HEK293 (cell line): ENCODE measurements at regions of chr3 and their contacts with region 1.

Region 1: DNA sequence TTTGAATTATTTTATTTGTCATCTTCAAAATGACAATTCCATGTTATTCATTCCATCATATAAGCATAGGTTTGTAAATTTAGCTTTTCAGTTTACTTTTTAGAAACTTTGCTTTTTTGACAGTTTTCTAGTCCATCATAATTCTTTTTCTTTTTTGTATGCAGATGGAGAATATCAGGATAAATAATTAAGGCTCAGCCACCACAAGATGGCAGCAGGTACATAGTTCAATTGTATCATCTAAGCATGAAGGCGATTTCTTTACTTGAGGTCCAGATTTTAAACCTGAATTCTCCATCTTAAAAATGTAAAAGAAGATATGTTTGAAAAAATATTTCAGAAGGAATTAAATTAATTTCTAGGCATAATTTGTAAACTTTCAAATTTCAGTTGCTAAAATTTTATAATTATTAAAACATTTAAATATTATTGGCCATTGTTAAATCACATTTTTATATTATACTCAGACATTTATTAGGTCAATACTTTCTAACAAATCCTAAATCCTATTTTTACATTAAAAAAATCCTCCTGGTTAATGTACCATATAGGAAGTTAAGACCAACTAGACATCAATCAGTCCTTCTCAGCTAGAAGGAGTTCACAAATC is 15.1 kb downstream of the PLSCR5 start:
- H3K4me3 ChIP-seq: no peak overlapping the region
- H3K27ac ChIP-seq: no peak overlapping the region
- H3K4me1 ChIP-seq: no peaks in the 10 kb centered on the region
- CTCF ChIP-seq: no peak

Region 2: GRCh38 chr3:146227486-146227885 is 362.5 kb before region 1 on chr3:
- CTCF ChIA-PET with region 1: no interaction called
- POLR2A ChIA-PET with region 1: no interaction called
- H3K4me3 ChIP-seq: no peak overlapping the region
- H3K27ac ChIP-seq: no peak overlapping the region
- H3K4me1 ChIP-seq: no peaks in the 10 kb centered on the region
- CTCF ChIP-seq: no peak

Region 3: GRCh38 chr3:146382386-146382785 is 207.6 kb before region 1 on chr3:
- CTCF ChIA-PET with region 1: no interaction called
- POLR2A ChIA-PET with region 1: no interaction called
- H3K4me3 ChIP-seq: no peak overlapping the region
- H3K27ac ChIP-seq: no peak overlapping the region
- H3K4me1 ChIP-seq: no peaks in the 10 kb centered on the region
- CTCF ChIP-seq: no peak

Region 4: GRCh38 chr3:146640955-146641867 is 51.2 kb after region 1 on chr3:
- CTCF ChIA-PET with region 1: interaction called, 16 read pairs
- POLR2A ChIA-PET with region 1: no interaction called
- H3K4me3 ChIP-seq: no peak overlapping the region
- H3K27ac ChIP-seq: no peak overlapping the region
- H3K4me1 ChIP-seq: no peaks in the 10 kb centered on the region
- CTCF ChIP-seq: no peak